ENCODE measurements at regions of chr19 and their contacts with region 1.

Region 1: DNA sequence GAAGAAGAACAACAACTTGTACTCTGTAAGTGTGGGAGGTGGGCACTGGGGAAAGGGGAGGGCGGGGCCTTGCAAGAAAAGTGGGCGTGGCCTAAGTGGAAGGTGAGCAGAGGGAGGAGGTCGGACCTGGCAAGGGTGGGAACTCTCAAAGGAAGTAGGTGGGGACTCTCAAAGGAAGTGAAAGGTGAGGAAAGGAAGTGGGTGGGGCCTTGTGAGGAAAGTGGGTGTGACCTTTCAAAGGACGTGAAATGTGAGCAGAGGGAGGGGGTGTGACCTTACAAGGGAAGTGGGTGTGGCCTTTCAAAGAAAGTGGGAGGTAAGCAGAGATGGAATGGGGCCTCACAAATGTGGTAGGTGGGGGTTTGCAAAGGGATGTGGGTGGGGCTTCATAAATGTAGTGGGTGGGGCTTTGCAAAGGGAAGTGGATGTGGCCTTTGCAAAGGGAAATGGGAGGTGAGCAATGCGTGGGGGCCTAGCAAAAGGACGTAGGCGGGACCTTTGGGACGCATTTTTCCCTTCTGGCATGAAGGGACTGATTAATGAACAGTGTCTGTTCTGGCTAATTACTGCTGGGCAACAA is 25.9 kb downstream of the ACSBG2 start:
- DNase-seq: no peak
- H3K4me3 ChIP-seq: no peak overlapping the region
- H3K27me3 ChIP-seq: no peaks in the 10 kb centered on the region
- CTCF ChIP-seq: no peak

Region 2: GRCh38 chr19:6362027-6362350 is 200.6 kb after region 1 on chr19:
- CTCF ChIA-PET with region 1: interaction called, 4 read pairs
- POLR2A ChIA-PET with region 1: interaction called, 16 read pairs
- DNase-seq: no peak
- H3K4me3 ChIP-seq: peak overlapping the region; percentile 92
- H3K27me3 ChIP-seq: no peaks in the 10 kb centered on the region
- CTCF ChIP-seq: no peak

Measured in BJ (cell line).